CD8-positive, alpha-beta memory T cell (primary cell): ENCODE measurements at regions of chr19 and their contacts with region 1.

Region 1: DNA sequence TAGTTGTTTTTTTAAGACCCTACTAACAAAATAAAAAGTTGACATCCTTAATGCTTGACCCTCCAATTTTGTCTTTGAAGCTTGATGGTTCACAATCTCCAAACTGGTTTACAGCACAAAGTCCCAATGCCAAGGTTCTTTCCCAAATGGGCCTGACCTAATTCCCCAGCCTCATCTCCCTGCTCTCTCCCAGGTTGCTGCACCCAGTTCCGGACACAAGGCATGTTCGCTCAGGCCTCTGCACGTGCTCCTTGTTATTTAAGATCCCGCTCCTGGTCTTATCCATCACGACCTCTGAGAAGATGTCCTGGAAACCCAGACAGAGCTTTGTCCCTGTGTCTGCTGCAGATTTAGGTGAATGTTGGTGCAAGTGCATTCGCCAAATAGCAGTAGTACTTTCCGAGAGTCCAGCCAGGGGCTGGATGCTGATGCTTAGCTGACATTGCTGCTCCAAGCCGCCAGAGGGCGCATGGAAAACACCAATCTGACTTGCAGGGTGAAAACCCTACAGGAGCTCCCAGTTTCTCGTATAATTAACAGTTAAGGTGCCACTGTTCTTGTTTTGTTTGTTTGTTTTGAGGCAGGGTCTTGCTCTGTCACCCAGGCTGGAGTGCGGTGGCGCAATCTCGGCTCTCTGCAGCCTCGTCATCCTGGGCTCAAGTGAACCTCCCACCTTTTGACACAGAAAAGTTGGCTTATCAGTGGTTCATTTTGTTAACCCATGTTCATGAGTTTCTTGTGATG is 18.5 kb downstream of the LYPD3 start:
- DNase-seq: peak; percentile 68 to 85 (median 70)
- H3K4me3 ChIP-seq: no peak overlapping the region
- H3K4me3 Mint-ChIP-seq: peak overlapping the region in 1 of 7 donors; percentile 27
- H3K27ac ChIP-seq: no peak overlapping the region
- H3K27ac Mint-ChIP-seq: peak overlapping the region in 6 of 8 donors; percentile 35 to 89 (median 75)
- H3K4me1 ChIP-seq: peaks cover 7% of the 10 kb centered on the region
- H3K4me1 Mint-ChIP-seq: peaks cover 5 to 21% (median 19%) of the 10 kb centered on the region in 3 donors
- H3K27me3 ChIP-seq: no peaks in the 10 kb centered on the region
- H3K27me3 Mint-ChIP-seq: no peaks in the 10 kb centered on the region

Region 2: DNA sequence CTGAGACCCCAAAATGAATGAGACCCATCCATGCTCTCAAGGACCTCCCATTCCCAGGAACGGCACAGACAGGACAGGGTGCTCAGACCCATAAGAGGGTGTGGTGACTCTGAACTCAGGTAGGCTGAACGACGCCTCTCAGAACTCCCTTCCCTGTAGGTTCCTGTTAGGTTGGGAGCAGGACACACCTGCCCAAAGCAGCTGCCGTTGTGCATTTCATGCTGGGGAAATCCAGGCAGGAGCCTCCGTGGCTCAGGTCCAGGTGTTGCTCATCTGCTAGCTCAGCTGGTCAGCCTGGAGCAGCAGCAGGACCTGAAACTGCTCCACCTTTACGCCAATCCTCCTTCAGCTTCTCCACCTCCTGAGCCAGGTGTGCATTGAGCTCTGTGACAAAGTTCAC is 51.4 kb before region 1 on chr19:
- CTCF ChIA-PET with region 1: no interaction called
- POLR2A ChIA-PET with region 1: no interaction called
- DNase-seq: no peak
- H3K4me3 ChIP-seq: no peak overlapping the region
- H3K4me3 Mint-ChIP-seq: no peak overlapping the region
- H3K27ac ChIP-seq: no peak overlapping the region
- H3K27ac Mint-ChIP-seq: no peak overlapping the region
- H3K4me1 ChIP-seq: no peaks in the 10 kb centered on the region
- H3K4me1 Mint-ChIP-seq: no peaks in the 10 kb centered on the region
- H3K27me3 ChIP-seq: peaks cover 7% of the 10 kb centered on the region
- H3K27me3 Mint-ChIP-seq: peaks cover 24 to 63% of the 10 kb centered on the region in 2 donors

Region 3: GRCh38 chr19:43408043-43408442 is 38.9 kb before region 1 on chr19:
- CTCF ChIA-PET with region 1: no interaction called
- POLR2A ChIA-PET with region 1: no interaction called
- DNase-seq: no peak
- H3K4me3 ChIP-seq: no peak overlapping the region
- H3K4me3 Mint-ChIP-seq: no peak overlapping the region
- H3K27ac ChIP-seq: no peak overlapping the region
- H3K27ac Mint-ChIP-seq: no peak overlapping the region
- H3K4me1 ChIP-seq: no peaks in the 10 kb centered on the region
- H3K4me1 Mint-ChIP-seq: no peaks in the 10 kb centered on the region
- H3K27me3 ChIP-seq: no peaks in the 10 kb centered on the region
- H3K27me3 Mint-ChIP-seq: peaks cover 14 to 25% of the 10 kb centered on the region in 2 donors

Region 4: GRCh38 chr19:43430142-43430710 is 16.7 kb before region 1 on chr19:
- CTCF ChIA-PET with region 1: interaction called, 50 read pairs
- POLR2A ChIA-PET with region 1: no interaction called
- DNase-seq: peak in 1 of 5 donors; percentile 12
- H3K4me3 ChIP-seq: no peak overlapping the region
- H3K4me3 Mint-ChIP-seq: peak overlapping the region in 1 of 7 donors; percentile 74
- H3K27ac ChIP-seq: no peak overlapping the region
- H3K27ac Mint-ChIP-seq: peak overlapping the region in 2 of 8 donors; percentile 86 to 91
- H3K4me1 ChIP-seq: peaks cover 9% of the 10 kb centered on the region
- H3K4me1 Mint-ChIP-seq: peaks cover 10 to 27% (median 20%) of the 10 kb centered on the region in 3 donors
- H3K27me3 ChIP-seq: no peaks in the 10 kb centered on the region
- H3K27me3 Mint-ChIP-seq: no peaks in the 10 kb centered on the region

Region 5: DNA sequence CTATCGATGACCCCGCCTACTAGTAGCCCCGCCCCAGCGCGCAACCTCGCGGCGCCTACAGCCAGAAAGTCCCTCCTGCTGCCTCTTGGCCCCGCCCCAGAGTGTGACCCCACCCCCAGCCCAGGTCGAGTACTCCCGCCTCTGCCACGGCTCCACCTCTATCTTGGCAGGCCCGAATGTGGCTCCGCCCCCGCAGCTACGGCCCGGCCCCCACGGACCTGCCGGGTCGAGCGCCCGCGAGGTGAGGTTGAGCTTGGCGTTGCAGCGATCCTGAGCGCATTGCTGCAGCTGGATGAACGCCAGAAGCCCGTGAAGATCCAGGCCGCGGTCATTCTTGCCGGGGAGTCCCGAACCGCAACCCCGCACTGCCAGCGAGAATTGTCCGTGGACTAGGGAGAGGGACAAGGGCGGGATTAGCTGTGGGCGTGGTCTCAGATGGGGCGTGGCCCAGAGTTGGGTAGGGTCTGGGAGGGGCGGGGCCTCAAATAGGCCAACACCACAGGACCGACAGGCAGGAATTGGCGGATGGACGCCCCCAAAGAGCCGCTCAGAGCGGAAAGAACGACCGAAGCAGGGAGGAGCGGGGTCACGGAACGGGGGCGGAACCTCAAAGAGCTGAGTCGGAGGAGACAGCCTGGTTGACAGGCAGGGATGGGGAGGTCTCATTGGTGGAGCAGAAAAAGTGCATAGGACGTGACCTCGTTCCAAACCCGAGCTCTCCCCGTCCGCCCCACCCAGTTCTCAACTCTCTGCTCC is 16.6 kb after region 1 on chr19:
- CTCF ChIA-PET with region 1: interaction called, 17 read pairs
- POLR2A ChIA-PET with region 1: interaction called, 9 read pairs
- DNase-seq: peak; percentile 98 to 100 (median 99)
- H3K4me3 ChIP-seq: peak overlapping the region; percentile 94
- H3K4me3 Mint-ChIP-seq: peak overlapping the region; percentile 89 to 97 (median 93)
- H3K27ac ChIP-seq: peak overlapping the region; percentile 80
- H3K27ac Mint-ChIP-seq: peak overlapping the region; percentile 94 to 99 (median 97)
- H3K4me1 ChIP-seq: peaks cover 31% of the 10 kb centered on the region
- H3K4me1 Mint-ChIP-seq: peaks cover 29 to 51% (median 33%) of the 10 kb centered on the region in 3 donors
- H3K27me3 ChIP-seq: no peaks in the 10 kb centered on the region
- H3K27me3 Mint-ChIP-seq: no peaks in the 10 kb centered on the region

Region 6: DNA sequence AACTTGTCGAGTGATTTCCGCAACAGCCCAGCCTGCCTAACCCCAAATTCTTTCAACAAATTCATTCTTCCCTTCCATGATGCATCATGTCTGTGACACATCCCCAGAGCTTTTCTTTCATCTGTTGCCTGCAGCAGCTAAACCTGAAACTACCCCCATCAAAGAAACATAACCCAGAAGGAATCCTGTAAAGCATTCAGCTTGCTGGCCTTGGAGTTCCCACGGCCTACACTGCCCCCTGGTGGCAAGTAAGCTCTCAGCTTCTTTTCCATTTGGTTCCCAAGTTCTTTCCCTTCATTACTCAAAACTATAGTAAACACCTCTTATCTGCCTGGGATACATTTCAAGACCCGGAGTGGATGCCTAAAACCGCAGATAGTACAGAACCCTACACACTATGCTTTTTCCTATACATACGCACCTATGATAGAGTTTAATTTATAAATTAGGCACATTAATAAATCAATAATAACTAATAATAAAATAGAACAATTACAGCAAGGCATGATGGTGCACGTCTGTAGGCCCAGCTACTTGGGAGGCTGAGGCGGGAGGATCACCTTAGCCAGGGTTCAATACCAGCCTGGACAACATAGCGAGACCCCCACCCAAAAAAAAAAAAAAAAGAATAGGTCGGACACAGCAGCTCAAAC is 72.6 kb after region 1 on chr19:
- CTCF ChIA-PET with region 1: interaction called, 316 read pairs
- POLR2A ChIA-PET with region 1: interaction called, 13 read pairs
- DNase-seq: peak; percentile 65 to 85 (median 74)
- H3K4me3 ChIP-seq: no peak overlapping the region
- H3K4me3 Mint-ChIP-seq: no peak overlapping the region
- H3K27ac ChIP-seq: no peak overlapping the region
- H3K27ac Mint-ChIP-seq: peak overlapping the region; percentile 1 to 94 (median 26)
- H3K4me1 ChIP-seq: peaks cover 4% of the 10 kb centered on the region
- H3K4me1 Mint-ChIP-seq: peaks cover 11 to 17% (median 16%) of the 10 kb centered on the region in 3 donors
- H3K27me3 ChIP-seq: no peaks in the 10 kb centered on the region
- H3K27me3 Mint-ChIP-seq: no peaks in the 10 kb centered on the region

Region 7: GRCh38 chr19:43555185-43555770 is 108.4 kb after region 1 on chr19:
- CTCF ChIA-PET with region 1: interaction called, 10 read pairs
- POLR2A ChIA-PET with region 1: no interaction called
- DNase-seq: peak; percentile 74 to 87 (median 77)
- H3K4me3 ChIP-seq: no peak overlapping the region
- H3K4me3 Mint-ChIP-seq: peak overlapping the region in 1 of 7 donors; percentile 28
- H3K27ac ChIP-seq: no peak overlapping the region
- H3K27ac Mint-ChIP-seq: peak overlapping the region; percentile 25 to 86 (median 58)
- H3K4me1 ChIP-seq: peaks cover 9% of the 10 kb centered on the region
- H3K4me1 Mint-ChIP-seq: peaks cover 16 to 20% (median 18%) of the 10 kb centered on the region in 3 donors
- H3K27me3 ChIP-seq: no peaks in the 10 kb centered on the region
- H3K27me3 Mint-ChIP-seq: no peaks in the 10 kb centered on the region